ENCODE measurements at regions of chr9 and their contacts with region 1.

Region 1: DNA sequence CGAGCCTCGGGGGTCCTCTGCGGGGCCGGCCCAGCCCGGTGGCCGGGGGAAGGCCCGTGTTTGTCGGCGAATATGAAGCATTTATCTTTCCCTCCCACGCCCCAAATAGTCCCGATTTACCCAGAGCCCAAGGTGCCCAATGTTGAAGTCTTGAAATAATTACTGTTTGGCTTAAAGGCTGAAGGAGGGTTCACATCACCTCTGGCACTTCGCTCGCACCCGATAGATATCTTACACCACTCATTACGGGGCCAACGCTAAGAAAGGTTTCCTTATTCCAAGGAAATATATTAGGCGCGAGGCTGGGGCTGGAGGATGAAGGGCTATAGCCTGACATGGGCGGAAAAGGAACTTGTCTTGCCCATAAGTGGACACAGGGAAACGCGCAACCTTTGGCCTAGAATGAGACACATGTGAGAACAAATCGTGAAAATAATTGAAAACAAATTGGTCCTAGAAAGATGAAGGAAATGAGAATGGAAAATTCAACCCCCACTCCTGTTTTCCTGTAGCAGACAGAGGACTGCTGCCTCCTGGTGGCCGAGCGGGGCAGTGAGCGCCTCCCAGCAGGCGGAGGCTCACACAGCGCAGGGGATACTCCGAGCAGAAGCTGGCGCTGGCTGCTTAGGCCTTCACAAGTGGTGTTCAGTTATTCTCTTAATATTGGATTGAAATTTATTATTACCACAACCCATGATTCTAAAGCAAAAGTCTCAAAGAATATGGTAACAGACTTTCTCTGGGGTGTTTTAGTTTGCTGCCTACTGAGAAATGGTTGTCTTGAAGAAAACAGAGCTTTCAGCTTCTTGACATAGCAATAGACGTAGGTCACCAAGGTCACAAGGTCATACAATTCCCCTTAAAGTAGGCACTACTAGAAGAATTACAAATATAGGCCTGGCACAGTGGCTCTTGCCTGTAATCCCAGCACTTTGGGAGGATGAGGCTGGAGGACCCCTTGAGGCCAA is 7.9 kb downstream of the CCL21 start:
- DNase-seq: peak; percentile 74 to 83
- H3K4me3 ChIP-seq: peak overlapping the region; percentile 37
- H3K4me3 Mint-ChIP-seq: peak overlapping the region; percentile 36
- H3K27ac Mint-ChIP-seq: no peak overlapping the region
- H3K4me1 ChIP-seq: no peaks in the 10 kb centered on the region
- H3K4me1 Mint-ChIP-seq: peaks cover 6% of the 10 kb centered on the region
- H3K27me3 ChIP-seq: no peaks in the 10 kb centered on the region
- H3K27me3 Mint-ChIP-seq: peaks cover 10% of the 10 kb centered on the region
- CTCF ChIP-seq: peak; percentile 82 to 98

Region 2: DNA sequence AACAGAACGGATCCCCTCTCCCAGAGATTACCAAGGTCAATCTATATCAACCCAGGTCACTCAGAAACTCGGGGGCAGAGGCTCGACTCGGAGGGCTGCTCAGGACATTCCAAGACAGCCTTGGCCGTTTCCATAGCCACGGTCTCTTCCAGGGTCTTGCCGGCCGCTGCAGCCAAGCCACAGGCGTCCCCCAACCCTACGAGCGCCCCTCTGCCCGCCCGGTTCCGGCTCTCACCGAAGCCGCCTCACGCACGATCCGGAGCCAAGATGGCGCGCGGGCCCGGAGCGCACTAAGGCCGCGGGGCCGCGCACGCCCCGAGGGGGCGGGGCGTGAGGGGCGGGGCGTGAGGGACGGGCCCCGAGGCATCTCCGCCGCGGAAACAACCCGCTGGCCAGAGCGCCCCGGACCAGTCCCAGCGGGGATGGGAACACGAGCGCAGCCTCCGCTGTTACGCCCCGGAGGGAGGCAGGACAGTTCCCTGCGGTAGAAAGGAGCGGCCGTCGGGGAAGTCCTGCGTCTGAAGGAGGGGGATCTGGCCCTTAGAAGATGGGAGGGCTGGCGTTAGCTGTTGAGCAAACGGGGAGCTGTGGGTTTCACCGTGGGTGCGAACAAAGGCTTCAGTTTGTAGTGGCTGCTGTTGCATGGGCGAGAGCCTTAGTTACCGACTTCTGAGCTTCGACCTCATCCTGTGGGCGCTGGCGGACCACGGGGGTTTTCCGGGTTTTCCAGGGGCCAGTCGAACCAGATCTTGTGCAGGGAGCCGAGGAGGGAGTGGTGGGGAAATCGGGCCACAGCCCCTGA is 90.0 kb before region 1 on chr9 and contains the start of gene RPP25L:
- CTCF ChIA-PET with region 1: no interaction called
- POLR2A ChIA-PET with region 1: no interaction called
- intact Hi-C with region 1: loop called (anchors 5 kb)
- DNase-seq: peak; percentile 81 to 90
- H3K4me3 ChIP-seq: peak within 1 kb of the TSS; percentile 92
- H3K4me3 Mint-ChIP-seq: peak within 1 kb of the TSS; percentile 86
- H3K27ac Mint-ChIP-seq: peak within 1 kb of the TSS; percentile 91
- H3K4me1 ChIP-seq: peaks cover 7% of the 10 kb centered on the region
- H3K4me1 Mint-ChIP-seq: no peaks in the 10 kb centered on the region
- H3K27me3 ChIP-seq: no peaks in the 10 kb centered on the region
- H3K27me3 Mint-ChIP-seq: no peaks in the 10 kb centered on the region
- CTCF ChIP-seq: no peak
- total RNA-seq, gene RPP25L: 26.2 and 27.4 TPM in 2 replicates

Region 3: DNA sequence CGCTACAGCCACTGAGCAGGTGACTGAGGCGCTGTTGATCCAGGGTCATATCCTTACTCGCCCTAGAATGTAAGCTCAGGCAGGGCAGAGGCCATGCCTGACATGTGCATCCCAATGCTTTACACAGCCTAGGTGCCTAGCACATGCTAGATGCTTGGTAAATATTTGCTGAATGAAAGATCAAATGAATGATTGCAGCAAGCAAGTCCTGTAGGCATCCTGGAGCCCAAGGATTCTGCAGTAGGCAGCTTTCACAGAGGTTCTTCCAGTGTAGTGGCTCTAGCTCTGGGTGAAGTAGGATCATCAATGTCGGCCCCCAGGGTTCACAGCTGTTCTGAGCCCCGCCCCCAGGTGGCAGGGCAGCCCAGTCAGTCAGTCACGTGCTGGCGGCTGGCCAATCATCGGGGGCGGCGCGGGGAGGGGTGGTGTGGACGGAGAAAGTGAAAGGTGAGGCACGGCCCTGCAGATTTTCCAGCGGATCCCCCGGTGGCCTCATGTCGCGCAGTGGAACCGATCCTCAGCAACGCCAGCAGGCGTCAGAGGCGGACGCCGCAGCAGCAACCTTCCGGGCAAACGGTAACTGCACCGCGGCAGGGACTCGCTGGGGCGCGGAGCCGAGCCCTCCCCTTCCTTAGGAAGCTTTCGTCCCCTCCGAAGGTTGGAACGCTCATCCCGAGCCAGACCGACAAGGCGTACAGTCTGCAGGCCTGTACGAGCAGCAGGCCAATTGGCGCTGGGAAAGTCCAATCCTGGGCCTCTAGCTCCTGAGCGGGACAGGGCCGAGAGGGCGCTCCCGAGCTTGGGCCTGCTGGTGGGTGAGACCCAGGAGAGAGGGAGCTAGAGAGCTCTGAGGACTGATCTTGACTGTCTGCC is 55.6 kb before region 1 on chr9 and contains the start of gene GALT:
- CTCF ChIA-PET with region 1: interaction called, 13 read pairs
- POLR2A ChIA-PET with region 1: no interaction called
- intact Hi-C with region 1: loop called (anchors 10 kb)
- DNase-seq: peak; percentile 97 to 98
- H3K4me3 ChIP-seq: peak within 1 kb of the TSS; percentile 77
- H3K4me3 Mint-ChIP-seq: peak within 1 kb of the TSS; percentile 81
- H3K27ac Mint-ChIP-seq: peak within 1 kb of the TSS; percentile 77
- H3K4me1 ChIP-seq: peaks cover 34% of the 10 kb centered on the region
- H3K4me1 Mint-ChIP-seq: peaks cover 25% of the 10 kb centered on the region
- H3K27me3 ChIP-seq: no peaks in the 10 kb centered on the region
- H3K27me3 Mint-ChIP-seq: no peaks in the 10 kb centered on the region
- CTCF ChIP-seq: peak; percentile 36 to 61
- total RNA-seq, gene GALT: 50.1 and 52.0 TPM in 2 replicates

Region 4: DNA sequence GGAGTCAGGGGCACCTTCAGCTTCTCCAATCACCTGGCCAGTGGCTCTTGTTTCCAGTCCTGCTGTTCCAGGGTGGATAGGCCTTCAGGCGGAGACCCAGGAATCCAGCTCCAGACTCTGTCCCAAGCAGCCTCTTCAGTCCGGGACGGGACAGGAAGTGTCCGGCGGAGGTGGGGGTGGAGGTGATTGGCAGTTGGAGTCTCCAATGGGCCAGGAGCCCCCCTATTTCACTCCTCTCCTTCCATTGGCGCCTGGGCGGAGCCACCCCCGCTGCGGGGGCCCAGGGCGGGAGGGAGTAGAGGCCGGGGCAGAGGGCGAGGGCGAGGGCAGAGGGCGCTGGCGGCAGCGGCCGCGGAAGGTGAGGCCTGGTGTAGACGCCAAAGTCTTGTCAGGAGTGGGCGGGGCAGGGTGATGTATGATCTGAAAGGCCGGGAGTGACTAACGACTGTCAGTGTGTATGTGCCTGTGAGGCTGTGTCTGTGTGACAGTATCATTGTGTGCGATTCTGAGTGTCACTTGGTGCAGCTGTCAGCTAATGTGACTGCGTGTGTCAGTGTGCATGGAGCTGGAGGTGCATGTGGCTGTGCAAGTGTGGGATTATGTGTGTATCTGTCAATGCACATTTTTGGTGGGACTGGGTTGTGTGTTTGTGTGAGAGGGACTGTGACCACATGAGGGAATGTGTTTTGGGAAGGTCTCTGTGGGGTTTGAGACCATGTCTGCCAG is 50.0 kb before region 1 on chr9 and contains the start of gene IL11RA:
- CTCF ChIA-PET with region 1: interaction called, 13 read pairs
- POLR2A ChIA-PET with region 1: no interaction called
- intact Hi-C with region 1: loop called (anchors 10 kb)
- DNase-seq: peak; percentile 97 to 98
- H3K4me3 ChIP-seq: peak within 1 kb of the TSS; percentile 31
- H3K4me3 Mint-ChIP-seq: peak within 1 kb of the TSS; percentile 66
- H3K27ac Mint-ChIP-seq: peak within 1 kb of the TSS; percentile 62
- H3K4me1 ChIP-seq: peaks cover 30% of the 10 kb centered on the region
- H3K4me1 Mint-ChIP-seq: peaks cover 30% of the 10 kb centered on the region
- H3K27me3 ChIP-seq: no peaks in the 10 kb centered on the region
- H3K27me3 Mint-ChIP-seq: no peaks in the 10 kb centered on the region
- CTCF ChIP-seq: peak in 1 of 2 experiments; percentile 20
- total RNA-seq, gene IL11RA: 5.6 and 7.1 TPM in 2 replicates

Region 5: GRCh38 chr9:34675048-34675714 is 26.9 kb before region 1 on chr9:
- CTCF ChIA-PET with region 1: interaction called, 25 read pairs
- POLR2A ChIA-PET with region 1: no interaction called
- intact Hi-C with region 1: loop called (anchors 1 kb)
- DNase-seq: peak; percentile 85 to 88
- H3K4me3 ChIP-seq: no peak overlapping the region
- H3K4me3 Mint-ChIP-seq: no peak overlapping the region
- H3K27ac Mint-ChIP-seq: no peak overlapping the region
- H3K4me1 ChIP-seq: no peaks in the 10 kb centered on the region
- H3K4me1 Mint-ChIP-seq: no peaks in the 10 kb centered on the region
- H3K27me3 ChIP-seq: no peaks in the 10 kb centered on the region
- H3K27me3 Mint-ChIP-seq: no peaks in the 10 kb centered on the region
- CTCF ChIP-seq: peak; percentile 92 to 99

Region 6: GRCh38 chr9:34686231-34686630 is 15.8 kb before region 1 on chr9:
- CTCF ChIA-PET with region 1: interaction called, 10 read pairs
- POLR2A ChIA-PET with region 1: no interaction called
- intact Hi-C with region 1: no loop called
- DNase-seq: no peak
- H3K4me3 ChIP-seq: no peak overlapping the region
- H3K4me3 Mint-ChIP-seq: no peak overlapping the region
- H3K27ac Mint-ChIP-seq: no peak overlapping the region
- H3K4me1 ChIP-seq: peaks cover 4% of the 10 kb centered on the region; the same call in 1 of the 2 replicates
- H3K4me1 Mint-ChIP-seq: peaks cover 6% of the 10 kb centered on the region
- H3K27me3 ChIP-seq: no peaks in the 10 kb centered on the region
- H3K27me3 Mint-ChIP-seq: no peaks in the 10 kb centered on the region
- CTCF ChIP-seq: no peak

Region 7: DNA sequence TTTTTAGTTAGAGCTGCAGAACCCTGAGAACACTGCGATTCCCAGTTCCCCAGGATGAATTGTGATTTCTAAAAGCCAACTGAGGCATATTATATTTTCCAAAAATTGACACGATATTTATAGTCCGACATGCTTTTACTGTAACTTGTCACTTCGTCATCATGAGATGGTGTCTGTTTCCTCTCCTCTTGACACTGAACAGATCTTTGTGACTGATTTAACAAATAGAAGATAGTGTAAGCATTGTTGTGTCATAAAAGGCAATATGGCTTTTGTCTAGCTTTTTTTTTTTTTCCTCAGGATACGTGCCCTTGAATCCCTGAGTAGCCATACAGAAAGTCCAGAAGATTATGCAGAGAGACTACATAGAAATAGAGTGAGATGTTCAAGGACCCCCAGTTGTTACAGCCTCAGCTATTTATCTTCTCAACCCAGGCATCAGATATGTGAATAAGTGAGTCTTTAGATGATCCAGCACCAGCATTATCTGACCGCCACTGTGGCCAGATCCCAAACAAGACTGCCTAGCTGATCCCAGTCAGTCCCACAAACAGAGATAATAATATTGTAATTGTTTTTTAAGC is 35.7 kb after region 1 on chr9:
- CTCF ChIA-PET with region 1: no interaction called
- POLR2A ChIA-PET with region 1: no interaction called
- intact Hi-C with region 1: loop called (anchors 1 kb)
- DNase-seq: no peak
- H3K4me3 ChIP-seq: no peak overlapping the region
- H3K4me3 Mint-ChIP-seq: no peak overlapping the region
- H3K27ac Mint-ChIP-seq: no peak overlapping the region
- H3K4me1 ChIP-seq: no peaks in the 10 kb centered on the region
- H3K4me1 Mint-ChIP-seq: no peaks in the 10 kb centered on the region
- H3K27me3 ChIP-seq: no peaks in the 10 kb centered on the region
- H3K27me3 Mint-ChIP-seq: peaks cover 12% of the 10 kb centered on the region
- CTCF ChIP-seq: no peak

Region 8: GRCh38 chr9:34777666-34778065 is 75.6 kb after region 1 on chr9:
- CTCF ChIA-PET with region 1: no interaction called
- POLR2A ChIA-PET with region 1: no interaction called
- intact Hi-C with region 1: no loop called
- DNase-seq: no peak
- H3K4me3 ChIP-seq: no peak overlapping the region
- H3K4me3 Mint-ChIP-seq: no peak overlapping the region
- H3K27ac Mint-ChIP-seq: no peak overlapping the region
- H3K4me1 ChIP-seq: no peaks in the 10 kb centered on the region
- H3K4me1 Mint-ChIP-seq: no peaks in the 10 kb centered on the region
- H3K27me3 ChIP-seq: no peaks in the 10 kb centered on the region; the same call in 1 of the 2 replicates
- H3K27me3 Mint-ChIP-seq: peaks cover 14% of the 10 kb centered on the region
- CTCF ChIP-seq: no peak

Measured in Caco-2 (cell line).